Endothelial cell of umbilical vein (primary cell): ENCODE measurements at regions of chr11 and their contacts with region 1.

Region 1: GRCh38 chr11:105244160-105244820 is 104.7 kb upstream of the CARD18 start:
- DNase-seq: peak; percentile 94
- H3K4me3 ChIP-seq: no peak overlapping the region
- H3K27ac ChIP-seq: peak overlapping the region; percentile 96
- H3K4me1 ChIP-seq: peaks cover 16% of the 10 kb centered on the region
- H3K27me3 ChIP-seq: no peaks in the 10 kb centered on the region
- CTCF ChIP-seq: no peak
- POLR2A ChIP-seq: no peak

Region 2: DNA sequence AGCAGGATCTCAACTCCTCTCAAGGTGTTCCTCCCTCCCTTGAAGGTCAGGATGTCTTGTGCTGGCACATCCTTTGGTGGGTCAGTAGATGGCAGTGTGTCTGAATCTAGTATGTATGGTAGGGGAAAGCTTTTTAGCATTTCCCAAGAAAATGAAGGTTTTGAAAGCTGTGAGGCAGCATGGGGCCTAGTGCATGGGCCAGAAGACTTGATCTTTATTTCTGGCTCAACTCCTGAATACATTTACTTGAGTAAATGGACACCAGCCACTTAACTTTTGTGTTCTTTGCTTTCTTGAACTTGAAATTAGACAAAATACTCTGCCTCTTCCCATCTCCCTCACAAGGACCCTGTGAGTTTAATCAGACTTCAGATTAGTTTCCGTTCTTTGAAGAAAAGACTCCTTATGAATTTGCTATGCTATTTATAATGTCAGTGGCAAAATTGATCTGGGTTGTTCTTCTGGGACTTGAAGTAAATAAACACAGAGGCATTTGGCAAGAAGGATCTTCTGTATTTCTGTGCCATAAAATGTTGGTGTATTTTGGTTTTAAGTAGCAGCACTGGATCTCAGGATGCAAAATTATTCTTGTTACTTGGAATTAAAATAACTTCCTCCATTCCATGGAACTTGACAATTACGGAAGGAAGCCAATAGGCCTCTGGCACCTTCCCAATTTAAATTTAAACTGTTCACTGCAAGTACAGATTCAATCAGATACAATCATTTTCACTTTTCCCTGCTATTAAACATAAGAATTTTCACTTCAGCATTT is 634.8 kb before region 1 on chr11:
- CTCF ChIA-PET with region 1: no interaction called
- POLR2A ChIA-PET with region 1: no interaction called
- dilution Hi-C with region 1: no loop called
- intact Hi-C with region 1: loop called (anchors 1 kb)
- DNase-seq: peak; percentile 80
- H3K4me3 ChIP-seq: no peak overlapping the region
- H3K27ac ChIP-seq: no peak overlapping the region
- H3K4me1 ChIP-seq: peaks cover 8% of the 10 kb centered on the region
- H3K27me3 ChIP-seq: no peaks in the 10 kb centered on the region
- CTCF ChIP-seq: peak; percentile 69 to 74
- POLR2A ChIP-seq: no peak

Region 3: GRCh38 chr11:104968355-104968855 is 275.9 kb before region 1 on chr11 and contains the start of gene CASP4:
- CTCF ChIA-PET with region 1: no interaction called
- POLR2A ChIA-PET with region 1: no interaction called
- dilution Hi-C with region 1: no loop called
- intact Hi-C with region 1: loop called (anchors 1 kb)
- DNase-seq: peak; percentile 93
- H3K4me3 ChIP-seq: peak within 1 kb of the TSS; percentile 48 to 93 (median 91)
- H3K27ac ChIP-seq: peak within 1 kb of the TSS; percentile 92
- H3K4me1 ChIP-seq: peaks cover 20% of the 10 kb centered on the region
- H3K27me3 ChIP-seq: no peaks in the 10 kb centered on the region
- CTCF ChIP-seq: no peak
- POLR2A ChIP-seq: peak; percentile 56
- total RNA-seq, gene CASP4: 77.4 and 83.1 TPM in 2 replicates

Region 4: DNA sequence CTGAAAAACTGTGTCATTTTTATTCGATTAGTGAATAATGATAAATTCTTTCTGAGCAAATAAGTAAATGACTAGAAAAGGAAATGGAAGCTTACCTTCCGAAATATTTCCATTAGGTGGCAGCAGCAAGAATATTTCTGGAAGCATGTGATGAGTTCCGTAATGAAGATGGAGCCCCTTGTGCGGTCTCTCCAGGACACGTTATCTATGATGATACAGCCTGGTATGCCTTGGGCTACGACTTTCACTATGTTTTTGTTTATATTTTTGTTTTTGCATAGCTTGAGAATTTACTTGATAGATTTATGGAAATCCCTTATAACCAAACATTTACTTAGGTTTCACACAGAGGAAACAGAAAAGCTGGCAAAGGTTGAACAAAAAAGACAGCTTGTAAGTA is 247.0 kb before region 1 on chr11:
- CTCF ChIA-PET with region 1: no interaction called
- POLR2A ChIA-PET with region 1: no interaction called
- dilution Hi-C with region 1: no loop called
- intact Hi-C with region 1: no loop called
- DNase-seq: peak; percentile 1
- H3K4me3 ChIP-seq: no peak overlapping the region
- H3K27ac ChIP-seq: no peak overlapping the region
- H3K4me1 ChIP-seq: peaks cover 3% of the 10 kb centered on the region
- H3K27me3 ChIP-seq: no peaks in the 10 kb centered on the region
- CTCF ChIP-seq: no peak
- POLR2A ChIP-seq: no peak

Region 5: DNA sequence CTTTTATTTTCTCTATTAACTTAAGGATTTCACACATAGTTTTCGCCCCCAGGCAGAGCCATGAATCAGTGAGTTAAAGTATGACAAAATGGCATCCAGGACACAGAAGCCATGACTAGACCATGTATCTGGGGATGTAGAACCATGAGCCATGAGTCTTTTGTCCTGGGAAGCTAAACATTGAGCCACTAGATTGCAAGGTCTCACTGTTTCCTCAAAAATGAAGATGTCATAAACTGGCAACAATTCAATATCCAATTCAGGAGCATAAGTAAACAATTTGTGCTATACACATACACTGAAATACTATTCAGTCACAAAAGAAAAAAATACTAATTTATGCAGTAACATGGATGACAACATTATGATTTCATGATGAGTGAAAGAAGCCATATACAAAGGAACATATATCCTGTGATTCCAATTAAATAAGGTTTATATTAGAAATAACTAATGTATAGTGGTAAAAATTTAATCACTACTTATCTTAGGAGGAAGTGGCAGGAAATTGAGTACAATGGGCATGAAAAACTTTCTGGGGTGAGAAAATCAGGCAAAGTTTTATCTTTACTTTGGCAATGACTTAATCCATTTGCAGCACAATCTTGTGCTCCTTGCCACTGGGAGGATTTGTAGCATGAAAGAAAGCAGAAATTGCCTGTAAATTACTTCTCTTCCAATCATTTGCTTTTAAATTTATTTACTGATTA is 170.7 kb before region 1 on chr11:
- CTCF ChIA-PET with region 1: no interaction called
- POLR2A ChIA-PET with region 1: no interaction called
- dilution Hi-C with region 1: no loop called
- intact Hi-C with region 1: loop called (anchors 1 kb)
- DNase-seq: peak; percentile 79
- H3K4me3 ChIP-seq: no peak overlapping the region
- H3K27ac ChIP-seq: peak overlapping the region; percentile 59
- H3K4me1 ChIP-seq: peaks cover 11% of the 10 kb centered on the region
- H3K27me3 ChIP-seq: no peaks in the 10 kb centered on the region
- CTCF ChIP-seq: no peak
- POLR2A ChIP-seq: no peak

Region 6: GRCh38 chr11:105144887-105145286 is 99.4 kb before region 1 on chr11:
- CTCF ChIA-PET with region 1: no interaction called
- POLR2A ChIA-PET with region 1: no interaction called
- dilution Hi-C with region 1: no loop called
- intact Hi-C with region 1: loop called (anchors 2 kb)
- DNase-seq: peak; percentile 36
- H3K4me3 ChIP-seq: no peak overlapping the region
- H3K27ac ChIP-seq: no peak overlapping the region
- H3K4me1 ChIP-seq: peaks cover 22% of the 10 kb centered on the region
- H3K27me3 ChIP-seq: no peaks in the 10 kb centered on the region
- CTCF ChIP-seq: no peak
- POLR2A ChIP-seq: no peak

Region 7: DNA sequence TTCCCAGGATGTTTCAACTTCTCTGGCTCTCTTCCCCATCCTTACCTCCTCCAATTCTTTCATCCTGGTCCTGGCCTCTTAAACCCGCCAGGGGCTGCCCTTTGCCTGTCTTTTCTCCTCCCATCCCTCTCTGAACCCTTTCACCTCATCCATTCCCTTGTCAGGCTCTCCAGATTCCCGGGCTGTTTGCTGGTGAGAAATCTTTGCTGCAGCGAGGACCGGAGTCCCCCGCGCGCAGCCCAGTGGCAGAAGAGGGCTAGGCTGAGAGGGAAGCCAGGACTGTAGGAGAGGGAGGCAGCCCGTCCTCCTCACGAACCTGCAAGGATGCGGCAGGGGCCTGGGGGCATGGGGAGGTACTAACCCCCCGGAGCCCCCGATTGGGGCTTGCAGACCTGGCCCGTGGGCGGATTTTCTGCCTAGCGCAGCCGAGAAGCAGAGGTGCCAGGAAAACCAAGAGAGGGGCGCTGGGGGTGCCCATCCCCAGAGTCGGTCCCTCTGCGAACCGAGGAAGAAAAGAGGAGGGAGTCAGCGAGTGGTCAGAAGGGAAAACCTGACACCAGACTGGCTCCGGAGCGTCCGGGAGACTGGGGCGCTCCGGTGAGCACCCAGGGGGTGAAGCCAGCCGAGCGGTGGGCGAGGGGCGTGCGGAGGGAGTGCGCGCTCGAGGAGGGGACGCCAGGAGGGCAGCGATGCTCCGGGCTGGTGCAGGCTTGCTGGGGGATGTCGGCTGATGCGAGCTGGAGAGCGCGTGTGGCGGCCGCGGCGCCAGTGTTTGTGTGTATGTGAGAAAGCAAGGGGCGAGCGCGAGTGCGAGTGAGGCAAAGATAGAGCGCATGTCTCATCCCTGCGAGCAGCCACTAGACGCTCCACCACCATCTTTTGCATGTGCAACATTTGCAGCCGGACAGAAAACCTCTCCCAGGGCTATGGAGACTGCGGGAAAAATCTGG is 365.8 kb after region 1 on chr11 and contains the start of gene GRIA4:
- CTCF ChIA-PET with region 1: no interaction called
- POLR2A ChIA-PET with region 1: no interaction called
- dilution Hi-C with region 1: no loop called
- intact Hi-C with region 1: loop called (anchors 10 kb)
- DNase-seq: peak; percentile 29
- H3K4me3 ChIP-seq: peak within 1 kb of the TSS; percentile 32 to 66 (median 41)
- H3K27ac ChIP-seq: no peak within 1 kb of the TSS
- H3K4me1 ChIP-seq: peaks cover 17% of the 10 kb centered on the region
- H3K27me3 ChIP-seq: peaks cover 28 to 30% of the 10 kb centered on the region in 2 experiments
- CTCF ChIP-seq: no peak
- POLR2A ChIP-seq: no peak
- total RNA-seq, gene GRIA4: not detected in 2 replicates